ENCODE measurements at regions of chr3 and their contacts with region 1.

Region 1: GRCh38 chr3:153595186-153595815 is 433.3 kb downstream of the RAP2B start:
- DNase-seq: no peak
- ATAC-seq: no peak
- H3K4me3 ChIP-seq: no peak overlapping the region
- H3K27ac ChIP-seq: no peak overlapping the region
- H3K4me1 ChIP-seq: no peaks in the 10 kb centered on the region
- H3K27me3 ChIP-seq: no peaks in the 10 kb centered on the region

Region 2: GRCh38 chr3:153026026-153026425 is 569.3 kb before region 1 on chr3:
- intact Hi-C with region 1: loop called in 1 of 2 experiments (anchors 5 kb)
- DNase-seq: no peak
- ATAC-seq: no peak
- H3K4me3 ChIP-seq: no peak overlapping the region
- H3K27ac ChIP-seq: no peak overlapping the region
- H3K4me1 ChIP-seq: no peaks in the 10 kb centered on the region
- H3K27me3 ChIP-seq: no peaks in the 10 kb centered on the region

Region 3: GRCh38 chr3:153484842-153485241 is 110.5 kb before region 1 on chr3:
- intact Hi-C with region 1: no loop called
- DNase-seq: no peak
- ATAC-seq: no peak
- H3K4me3 ChIP-seq: no peak overlapping the region
- H3K27ac ChIP-seq: no peak overlapping the region
- H3K4me1 ChIP-seq: no peaks in the 10 kb centered on the region
- H3K27me3 ChIP-seq: no peaks in the 10 kb centered on the region

Region 4: DNA sequence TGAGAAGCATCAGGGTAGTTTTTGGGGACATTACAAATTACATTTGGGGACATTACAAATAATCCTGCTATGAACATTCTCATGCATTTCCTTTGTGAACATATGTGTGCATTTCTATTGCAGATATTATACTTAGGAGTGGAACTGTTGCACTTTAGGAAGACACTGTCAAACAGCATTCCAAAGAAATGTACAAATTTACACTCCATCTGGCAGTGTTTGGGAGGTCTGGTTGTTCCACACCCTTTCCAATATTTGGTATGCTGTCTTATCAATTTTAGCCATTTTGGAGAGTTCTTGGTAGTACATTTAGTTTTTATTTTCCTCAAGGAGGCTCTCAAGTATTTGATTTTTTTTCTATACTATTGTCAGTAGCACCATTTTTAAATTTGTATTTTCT is 106.8 kb after region 1 on chr3:
- intact Hi-C with region 1: no loop called
- DNase-seq: no peak
- ATAC-seq: no peak
- H3K4me3 ChIP-seq: no peak overlapping the region
- H3K27ac ChIP-seq: no peak overlapping the region
- H3K4me1 ChIP-seq: no peaks in the 10 kb centered on the region
- H3K27me3 ChIP-seq: no peaks in the 10 kb centered on the region

Measured in aorta (tissue), 5 donors.